GM12878 (cell line): ENCODE measurements at regions of chr1 and their contacts with region 1.

Region 1: GRCh38 chr1:23444104-23444533 is 19.6 kb upstream of the TCEA3 start:
- DNase-seq: no peak
- ATAC-seq: no peak
- H3K4me3 ChIP-seq: no peak overlapping the region
- H3K27ac ChIP-seq: no peak overlapping the region
- H3K4me1 ChIP-seq: no peaks in the 10 kb centered on the region
- H3K27me3 ChIP-seq: peaks cover 0 to 3% of the 10 kb centered on the region in 2 experiments; a peak in 1 of 4 replicates
- CTCF ChIP-seq: no peak
- EP300 ChIP-seq: no peak
- POLR2A ChIP-seq: no peak
- RAD21 ChIP-seq: no peak

Region 2: GRCh38 chr1:23322770-23323169 is 121.3 kb before region 1 on chr1:
- CTCF ChIA-PET with region 1: no interaction called
- POLR2A ChIA-PET with region 1: no interaction called
- RAD21 ChIA-PET with region 1: no interaction called
- SMC1A ChIA-PET with region 1: no interaction called
- in situ Hi-C with region 1: no loop called
- intact Hi-C with region 1: no loop called
- DNase-seq: no peak
- ATAC-seq: no peak
- H3K4me3 ChIP-seq: no peak overlapping the region
- H3K27ac ChIP-seq: no peak overlapping the region
- H3K4me1 ChIP-seq: no peaks in the 10 kb centered on the region
- H3K27me3 ChIP-seq: no peaks in the 10 kb centered on the region
- CTCF ChIP-seq: no peak
- EP300 ChIP-seq: no peak
- POLR2A ChIP-seq: no peak
- RAD21 ChIP-seq: no peak

Region 3: GRCh38 chr1:23489842-23490241 is 45.7 kb after region 1 on chr1:
- CTCF ChIA-PET with region 1: no interaction called
- POLR2A ChIA-PET with region 1: interaction called, 10 read pairs
- RAD21 ChIA-PET with region 1: no interaction called
- SMC1A ChIA-PET with region 1: no interaction called
- in situ Hi-C with region 1: no loop called
- intact Hi-C with region 1: no loop called
- DNase-seq: no peak
- ATAC-seq: no peak
- H3K4me3 ChIP-seq: no peak overlapping the region
- H3K27ac ChIP-seq: no peak overlapping the region
- H3K4me1 ChIP-seq: no peaks in the 10 kb centered on the region; the same call in 1 of the 2 replicates
- H3K27me3 ChIP-seq: peaks cover 0 to 3% of the 10 kb centered on the region in 2 experiments; a peak in 1 of 4 replicates
- CTCF ChIP-seq: no peak
- EP300 ChIP-seq: no peak
- POLR2A ChIP-seq: no peak
- RAD21 ChIP-seq: no peak